IMR-90 (cell line): ENCODE measurements at regions of chr17 and their contacts with region 1.

Region 1: DNA sequence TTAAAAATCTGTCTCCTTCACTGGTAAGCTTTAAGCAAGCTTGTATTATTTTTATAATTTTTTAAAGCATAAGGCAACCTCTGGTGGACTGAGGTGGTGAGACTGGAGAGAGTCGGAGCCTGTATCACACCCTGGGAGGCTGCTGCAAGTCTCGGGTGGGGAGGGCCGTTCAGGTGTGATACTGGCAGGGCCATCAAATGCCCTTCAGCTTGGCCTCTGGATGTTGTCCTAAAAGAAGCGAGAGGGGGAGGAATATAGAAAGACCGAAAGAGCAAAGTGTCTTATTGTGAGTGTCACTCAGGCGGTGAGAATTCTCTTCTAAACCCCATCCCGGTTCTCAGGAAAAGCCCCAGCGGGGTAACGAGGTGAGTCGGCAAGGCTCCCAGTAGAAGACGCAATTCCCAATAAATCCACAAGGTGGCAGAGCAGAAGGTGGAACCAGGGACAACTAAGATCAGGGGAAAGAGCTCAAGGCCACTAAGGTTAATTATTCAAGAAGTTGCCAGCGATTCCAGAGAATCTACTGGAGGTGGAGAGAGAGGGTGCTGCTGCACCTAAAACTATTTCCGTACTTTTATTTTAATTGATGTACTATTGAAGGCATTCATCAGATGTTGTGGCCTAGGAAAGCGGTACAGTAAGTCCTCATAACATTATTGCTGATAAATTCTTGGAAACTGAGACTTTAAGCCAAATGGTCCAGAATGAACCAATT is 14.1 kb downstream of the C17orf67 start:
- DNase-seq: peak; percentile 67
- ATAC-seq: peak; percentile 74
- H3K4me3 ChIP-seq: no peak overlapping the region
- H3K27ac ChIP-seq: no peak overlapping the region
- H3K4me1 ChIP-seq: peaks cover 3% of the 10 kb centered on the region; the same call in 1 of the 2 replicates
- H3K27me3 ChIP-seq: no peaks in the 10 kb centered on the region
- CTCF ChIP-seq: peak; percentile 77
- POLR2A ChIP-seq: no peak
- RAD21 ChIP-seq: peak; percentile 66

Region 2: GRCh38 chr17:56602292-56603130 is 217.1 kb before region 1 on chr17:
- CTCF ChIA-PET with region 1: no interaction called
- POLR2A ChIA-PET with region 1: no interaction called
- dilution Hi-C with region 1: no loop called
- in situ Hi-C with region 1: no loop called
- intact Hi-C with region 1: no loop called
- DNase-seq: no peak
- ATAC-seq: no peak
- H3K4me3 ChIP-seq: no peak overlapping the region
- H3K27ac ChIP-seq: no peak overlapping the region
- H3K4me1 ChIP-seq: peaks cover 7% of the 10 kb centered on the region
- H3K27me3 ChIP-seq: peaks cover 12% of the 10 kb centered on the region
- CTCF ChIP-seq: no peak
- POLR2A ChIP-seq: no peak
- RAD21 ChIP-seq: no peak

Region 3: GRCh38 chr17:56939901-56940343 is 120.3 kb after region 1 on chr17:
- CTCF ChIA-PET with region 1: interaction called, 10 read pairs
- POLR2A ChIA-PET with region 1: no interaction called
- dilution Hi-C with region 1: no loop called
- in situ Hi-C with region 1: loop called (anchors 5 kb)
- intact Hi-C with region 1: loop called (anchors 1 kb)
- DNase-seq: peak; percentile 62
- ATAC-seq: peak; percentile 92
- H3K4me3 ChIP-seq: no peak overlapping the region
- H3K27ac ChIP-seq: no peak overlapping the region
- H3K4me1 ChIP-seq: no peaks in the 10 kb centered on the region
- H3K27me3 ChIP-seq: no peaks in the 10 kb centered on the region
- CTCF ChIP-seq: peak; percentile 73
- POLR2A ChIP-seq: no peak
- RAD21 ChIP-seq: peak; percentile 79

Region 4: DNA sequence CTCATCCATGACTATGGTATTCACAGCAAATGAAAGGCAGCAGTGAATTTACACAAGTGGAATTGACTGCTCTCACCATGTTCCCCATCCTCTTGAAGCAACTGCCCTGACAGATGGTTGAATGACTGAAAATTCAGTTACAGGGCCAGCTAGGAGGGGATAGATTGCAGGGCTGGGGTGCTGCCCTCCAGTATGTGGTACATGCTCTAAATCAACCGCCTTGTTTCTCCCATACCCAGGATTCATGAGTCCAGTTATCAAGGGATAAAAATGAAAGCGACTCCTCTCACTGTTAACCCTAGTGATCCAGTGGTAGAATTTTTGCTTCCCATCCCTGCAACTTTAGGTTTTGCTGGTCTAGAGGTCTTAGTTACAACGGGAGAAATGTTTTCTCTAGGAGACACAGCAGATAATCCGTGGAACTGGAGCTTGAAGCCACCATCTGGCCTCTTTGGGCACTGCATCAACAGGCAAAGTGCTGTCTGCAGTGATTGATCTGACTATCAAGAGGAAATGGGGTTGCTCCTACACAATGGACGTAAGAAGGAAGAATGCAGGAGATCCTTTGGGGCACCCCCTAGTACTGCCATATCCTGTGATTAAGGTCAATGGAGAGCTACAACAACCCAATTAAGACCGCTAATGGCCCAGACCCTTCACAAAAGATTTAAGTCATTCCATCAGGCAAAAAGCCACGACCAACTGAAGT is 190.3 kb after region 1 on chr17:
- CTCF ChIA-PET with region 1: interaction called, 4 read pairs
- POLR2A ChIA-PET with region 1: no interaction called
- dilution Hi-C with region 1: no loop called
- in situ Hi-C with region 1: no loop called
- intact Hi-C with region 1: loop called (anchors 5 kb)
- DNase-seq: peak; percentile 47
- ATAC-seq: peak; percentile 90
- H3K4me3 ChIP-seq: no peak overlapping the region
- H3K27ac ChIP-seq: no peak overlapping the region
- H3K4me1 ChIP-seq: no peaks in the 10 kb centered on the region
- H3K27me3 ChIP-seq: peaks cover 3% of the 10 kb centered on the region; the same call in 1 of the 2 replicates
- CTCF ChIP-seq: peak; percentile 57
- POLR2A ChIP-seq: no peak
- RAD21 ChIP-seq: peak; percentile 50